Right cardiac atrium (tissue), 5 donors: ENCODE measurements at regions of chr1 and their contacts with region 1.

Region 1: GRCh38 chr1:155017041-155017945 is 14.7 kb downstream of the ZBTB7B start:
- DNase-seq: peak; percentile 94 to 96 (median 95)
- ATAC-seq: peak; percentile 92
- H3K4me3 ChIP-seq: peak overlapping the region; percentile 36
- H3K27ac ChIP-seq: peak overlapping the region; percentile 73
- H3K4me1 ChIP-seq: peaks cover 5% of the 10 kb centered on the region
- H3K27me3 ChIP-seq: no peaks in the 10 kb centered on the region

Region 2: DNA sequence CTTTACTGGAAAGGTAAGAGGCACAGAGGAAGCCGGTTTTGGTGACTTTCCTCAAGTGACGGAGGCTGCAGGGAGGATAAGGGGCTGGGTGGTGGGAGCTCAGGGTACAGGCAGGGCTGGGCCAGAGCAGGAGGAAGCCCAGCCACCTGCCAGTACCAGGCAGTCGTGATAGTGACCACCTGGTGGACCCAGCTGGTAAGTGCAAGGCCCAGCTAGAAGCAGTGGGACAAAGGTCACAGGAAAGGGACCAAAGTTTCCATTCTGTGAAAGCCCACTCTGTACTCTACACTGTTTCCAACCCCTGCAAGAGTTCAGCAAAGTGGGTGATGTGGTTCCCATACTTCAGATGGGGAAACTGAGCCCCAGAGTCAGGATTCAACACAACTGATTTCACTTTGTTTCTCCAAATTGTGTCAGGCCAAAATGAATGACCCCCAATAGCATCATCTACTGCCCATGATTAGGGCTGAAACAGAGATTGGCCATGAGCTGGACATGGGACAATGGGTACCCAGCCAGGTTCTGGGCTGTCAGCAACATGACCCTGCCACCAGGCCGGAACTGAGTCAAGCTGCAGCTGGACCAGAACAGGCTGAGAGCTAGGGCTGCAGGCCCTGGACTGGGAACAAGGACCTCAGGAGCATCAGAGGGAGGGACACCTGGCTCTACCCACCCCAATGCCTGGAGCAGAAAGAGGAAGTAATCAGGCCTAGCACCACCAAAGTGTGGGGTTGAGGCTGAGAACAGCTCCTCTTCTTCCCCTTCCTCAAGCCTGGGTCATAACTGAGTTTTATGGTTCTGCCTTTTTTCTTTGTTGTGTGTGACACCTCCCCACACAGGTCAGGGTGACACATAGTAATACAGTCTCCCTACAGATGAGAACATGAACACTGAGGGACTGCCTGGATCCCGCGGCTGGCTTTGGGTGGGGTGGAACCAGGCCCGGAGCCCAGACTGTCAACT is 197.4 kb before region 1 on chr1:
- intact Hi-C with region 1: no loop called
- DNase-seq: no peak
- ATAC-seq: peak; percentile 20 to 33
- H3K4me3 ChIP-seq: no peak overlapping the region
- H3K27ac ChIP-seq: no peak overlapping the region
- H3K4me1 ChIP-seq: no peaks in the 10 kb centered on the region
- H3K27me3 ChIP-seq: no peaks in the 10 kb centered on the region

Region 3: DNA sequence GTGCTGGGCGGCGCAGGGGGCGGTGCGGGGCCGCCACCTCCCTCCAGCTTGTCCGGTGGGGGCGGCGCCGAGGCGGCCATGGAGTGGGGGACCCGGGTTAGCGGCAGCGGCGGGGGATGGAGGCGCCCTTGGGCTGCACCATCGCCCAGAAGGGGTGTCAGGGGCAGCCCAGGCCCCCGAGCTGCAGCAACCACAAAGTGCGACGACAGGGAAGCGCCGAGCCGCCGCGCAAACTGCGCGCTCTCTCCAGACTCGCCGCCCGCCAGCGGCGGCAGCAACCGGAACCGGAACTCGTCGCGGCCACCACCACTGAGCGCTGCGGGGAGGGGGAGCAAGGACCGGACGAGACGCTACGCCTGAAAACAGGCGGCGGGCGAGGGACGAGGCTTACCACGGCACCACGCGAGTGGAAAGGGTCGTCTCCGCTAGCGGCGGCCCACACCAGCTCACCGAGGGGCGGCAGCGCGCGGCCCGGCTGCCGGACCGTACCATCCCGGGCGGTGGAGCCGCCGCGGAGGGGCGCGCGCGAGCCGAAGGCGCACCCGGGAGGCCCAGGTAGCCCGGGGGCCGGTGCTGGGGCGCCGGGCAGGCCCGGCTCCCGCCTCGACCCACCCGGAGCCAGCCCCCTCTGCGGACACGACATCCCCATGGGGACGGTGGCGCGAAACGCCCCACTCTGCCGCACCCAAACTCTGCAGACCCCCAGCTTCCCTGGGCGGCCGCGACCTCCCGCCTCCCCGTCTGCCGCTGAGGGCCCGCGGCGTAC is 55.6 kb before region 1 on chr1 and contains the start of gene PYGO2:
- intact Hi-C with region 1: loop called in 2 of 4 experiments (anchors 5 to 10 kb)
- DNase-seq: peak; percentile 86 to 94 (median 93)
- ATAC-seq: peak; percentile 88 to 90
- H3K4me3 ChIP-seq: peak within 1 kb of the TSS; percentile 68
- H3K27ac ChIP-seq: peak within 1 kb of the TSS; percentile 99
- H3K4me1 ChIP-seq: peaks cover 2% of the 10 kb centered on the region
- H3K27me3 ChIP-seq: no peaks in the 10 kb centered on the region
- total RNA-seq, gene PYGO2: 14.6 to 22.0 (median 18.6) TPM